ENCODE measurements at regions of chr1 and their contacts with region 1.

Region 1: GRCh38 chr1:28028873-28029654 is 59.3 kb downstream of the EYA3 start:
- DNase-seq: no peak
- ATAC-seq: no peak
- H3K4me3 ChIP-seq: peak overlapping the region in 1 of 2 donors; percentile 10
- H3K27ac ChIP-seq: peak overlapping the region; percentile 87 to 98
- H3K4me1 ChIP-seq: peaks cover 4 to 5% of the 10 kb centered on the region in 2 donors
- H3K27me3 ChIP-seq: no peaks in the 10 kb centered on the region

Region 2: GRCh38 chr1:28067523-28068090 is 38.5 kb after region 1 on chr1:
- intact Hi-C with region 1: loop called in 1 of 2 experiments (anchors 5 kb)
- DNase-seq: no peak
- ATAC-seq: no peak
- H3K4me3 ChIP-seq: no peak overlapping the region
- H3K27ac ChIP-seq: no peak overlapping the region
- H3K4me1 ChIP-seq: peaks cover 0 to 4% of the 10 kb centered on the region in 2 donors
- H3K27me3 ChIP-seq: no peaks in the 10 kb centered on the region

Region 3: GRCh38 chr1:28088168-28088961 is 59.3 kb after region 1 on chr1 and contains the start of gene EYA3:
- intact Hi-C with region 1: loop called in 1 of 2 experiments (anchors 5 kb)
- DNase-seq: peak; percentile 98 to 100
- ATAC-seq: peak; percentile 100
- H3K4me3 ChIP-seq: peak within 1 kb of the TSS; percentile 49 to 78
- H3K27ac ChIP-seq: peak within 1 kb of the TSS; percentile 71 to 79
- H3K4me1 ChIP-seq: peaks cover 4 to 6% of the 10 kb centered on the region in 2 donors
- H3K27me3 ChIP-seq: no peaks in the 10 kb centered on the region
- total RNA-seq, gene EYA3: 20.9 to 25.3 TPM

Region 4: DNA sequence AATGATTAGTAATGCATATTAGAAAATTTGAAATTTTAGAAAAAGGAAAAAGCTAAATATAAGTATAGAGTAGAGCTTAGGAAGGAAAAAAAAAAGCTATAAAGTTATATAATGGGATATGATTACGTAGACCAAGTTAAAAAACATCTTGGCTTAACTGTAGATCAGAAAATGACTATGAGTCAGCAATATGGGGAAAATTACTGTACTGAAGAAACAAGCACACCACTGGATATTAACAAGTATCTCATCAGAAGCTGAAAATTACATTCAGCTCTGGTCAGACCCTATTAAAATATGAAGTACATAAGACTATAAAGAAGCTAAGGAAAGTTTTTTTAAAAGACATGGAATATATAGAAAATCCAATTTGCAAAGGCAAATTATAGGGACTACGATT is 184.3 kb after region 1 on chr1:
- intact Hi-C with region 1: no loop called
- DNase-seq: no peak
- ATAC-seq: no peak
- H3K4me3 ChIP-seq: no peak overlapping the region
- H3K27ac ChIP-seq: no peak overlapping the region
- H3K4me1 ChIP-seq: no peaks in the 10 kb centered on the region
- H3K27me3 ChIP-seq: no peaks in the 10 kb centered on the region

Measured in aorta (tissue), 5 donors.